Panc1 (cell line): ENCODE measurements at regions of chr17 and their contacts with region 1.

Region 1: DNA sequence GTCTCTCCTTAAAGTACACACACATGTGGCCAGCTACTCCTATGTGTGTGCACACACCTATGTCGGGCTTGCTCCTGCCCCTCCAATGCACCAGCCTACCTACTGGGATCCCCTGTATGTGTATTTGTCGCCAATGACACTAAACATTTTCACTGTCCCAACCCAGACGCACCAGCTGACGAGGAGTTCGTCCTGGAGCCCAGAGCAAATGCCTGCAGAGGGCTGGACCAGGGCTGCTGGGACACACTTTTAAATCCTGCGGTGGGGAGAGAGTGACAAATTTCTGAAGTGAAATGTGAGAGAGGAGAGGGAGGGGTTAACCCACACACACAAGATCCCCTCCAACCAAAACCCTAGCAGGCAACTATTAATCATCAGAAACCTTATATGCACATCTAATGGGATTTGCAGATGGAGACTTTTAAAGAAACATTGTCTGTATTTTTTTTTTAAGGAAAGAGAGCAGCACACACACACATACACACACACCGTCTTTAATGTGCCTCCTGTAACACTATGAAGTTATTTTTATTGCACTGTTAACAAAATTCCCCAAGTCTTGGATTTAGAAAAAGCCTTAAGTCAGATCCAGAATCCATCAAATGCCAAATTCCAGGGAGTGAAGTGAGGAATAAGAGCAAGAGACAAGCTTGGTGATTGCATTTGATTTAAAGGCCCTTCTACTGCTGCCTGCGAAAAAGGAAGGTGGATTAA is at the start of gene MEOX1:
- DNase-seq: no peak
- ATAC-seq: no peak
- H3K4me3 ChIP-seq: no peak within 1 kb of the TSS
- H3K27ac ChIP-seq: no peak within 1 kb of the TSS
- H3K4me1 ChIP-seq: no peaks in the 10 kb centered on the region; the same call in 1 of the 2 replicates
- H3K27me3 ChIP-seq: no peaks in the 10 kb centered on the region
- CTCF ChIP-seq: no peak
- total RNA-seq, gene MEOX1: 0.21 TPM

Region 2: DNA sequence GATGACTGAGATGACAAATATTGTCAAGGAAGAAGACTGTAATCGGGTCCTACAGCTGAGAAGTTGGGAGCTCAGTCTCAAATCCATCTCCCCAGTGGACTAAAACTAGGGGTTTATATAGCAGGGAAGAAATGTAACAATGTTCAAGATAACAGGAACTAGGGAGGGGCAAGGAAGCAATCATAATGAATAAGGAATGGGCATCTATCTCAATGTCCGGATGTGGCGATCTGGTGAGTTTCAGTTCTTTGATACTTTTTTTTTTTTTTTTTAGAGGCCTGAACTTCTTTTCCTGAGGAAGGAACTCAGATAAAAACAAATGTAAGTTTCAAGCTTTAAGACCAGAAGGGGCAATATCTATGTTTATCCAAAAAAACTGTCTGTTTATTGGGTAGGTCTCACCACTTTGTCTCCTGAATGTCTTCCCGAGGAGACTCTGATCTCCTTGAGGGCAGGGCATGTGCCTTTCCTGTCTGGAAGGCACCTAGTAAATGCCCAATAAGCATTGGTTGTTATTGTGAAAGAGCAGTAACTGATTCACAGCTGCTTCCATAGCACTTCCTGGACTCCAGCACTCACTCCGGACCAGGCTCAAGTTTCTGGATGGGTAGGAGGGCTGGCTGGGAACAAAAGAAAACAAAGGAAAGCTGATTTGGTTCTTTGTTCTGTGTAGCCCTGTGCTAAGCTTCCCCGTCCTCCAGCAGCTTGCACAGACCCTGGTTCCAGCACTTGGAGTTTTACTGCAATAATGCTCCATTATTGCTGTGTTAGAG is 52.1 kb before region 1 on chr17:
- CTCF ChIA-PET with region 1: no interaction called
- POLR2A ChIA-PET with region 1: interaction called, 18 read pairs
- in situ Hi-C with region 1: no loop called
- intact Hi-C with region 1: no loop called
- DNase-seq: no peak
- ATAC-seq: no peak
- H3K4me3 ChIP-seq: no peak overlapping the region
- H3K27ac ChIP-seq: no peak overlapping the region
- H3K4me1 ChIP-seq: no peaks in the 10 kb centered on the region
- H3K27me3 ChIP-seq: no peaks in the 10 kb centered on the region
- CTCF ChIP-seq: no peak

Region 3: GRCh38 chr17:43648916-43649315 is 12.9 kb before region 1 on chr17:
- CTCF ChIA-PET with region 1: interaction called, 10 read pairs
- POLR2A ChIA-PET with region 1: no interaction called
- in situ Hi-C with region 1: no loop called
- intact Hi-C with region 1: no loop called
- DNase-seq: no peak
- ATAC-seq: no peak
- H3K4me3 ChIP-seq: no peak overlapping the region
- H3K27ac ChIP-seq: no peak overlapping the region
- H3K4me1 ChIP-seq: no peaks in the 10 kb centered on the region
- H3K27me3 ChIP-seq: no peaks in the 10 kb centered on the region
- CTCF ChIP-seq: no peak